ENCODE measurements at regions of chr3 and their contacts with region 1.

Region 1: DNA sequence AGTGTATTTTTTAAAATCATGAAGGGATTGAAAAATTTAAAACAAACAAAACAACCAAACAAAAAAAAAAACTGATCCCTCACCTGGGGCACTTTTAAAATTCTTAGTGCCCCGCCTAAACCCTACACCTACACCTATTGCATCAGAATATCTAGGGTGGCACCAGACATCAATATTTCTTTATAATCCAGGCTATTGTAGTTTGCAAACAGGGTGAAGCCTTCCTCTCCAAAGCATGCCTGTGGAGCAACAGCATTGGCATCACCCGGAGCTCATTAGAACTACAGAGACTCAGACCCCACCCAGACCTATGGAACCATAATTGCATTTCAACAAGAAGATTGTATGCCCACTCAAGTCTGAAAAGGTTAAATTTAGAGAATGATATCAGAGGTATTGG is 54.9 kb upstream of the ACP3 start:
- DNase-seq: no peak
- H3K4me3 ChIP-seq: no peak overlapping the region
- H3K27ac ChIP-seq: no peak overlapping the region
- H3K4me1 ChIP-seq: no peaks in the 10 kb centered on the region
- H3K27me3 ChIP-seq: no peaks in the 10 kb centered on the region
- CTCF ChIP-seq: no peak
- EP300 ChIP-seq: no peak
- POLR2A ChIP-seq: no peak

Region 2: DNA sequence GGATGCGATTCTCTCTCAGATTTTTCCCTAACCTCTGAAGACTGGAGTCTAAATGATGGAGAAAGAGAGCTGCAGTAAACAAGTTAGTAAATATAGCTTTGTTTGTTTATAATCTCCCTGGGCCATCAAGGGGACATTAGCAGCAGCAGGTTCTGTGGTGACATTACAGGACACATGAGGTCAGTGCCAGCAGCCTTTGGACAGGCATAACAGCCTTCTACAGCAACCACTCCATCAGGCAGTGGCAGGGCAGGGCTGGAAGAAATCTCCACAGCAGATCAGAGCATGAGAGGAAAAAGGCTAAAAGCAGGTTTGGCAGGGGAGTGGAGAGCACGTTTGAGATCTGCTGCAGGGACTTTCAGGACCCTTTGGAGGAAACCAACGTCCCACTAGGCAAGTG is 72.7 kb before region 1 on chr3:
- in situ Hi-C with region 1: no loop called
- intact Hi-C with region 1: no loop called
- DNase-seq: no peak
- H3K4me3 ChIP-seq: no peak overlapping the region
- H3K27ac ChIP-seq: no peak overlapping the region
- H3K4me1 ChIP-seq: no peaks in the 10 kb centered on the region
- H3K27me3 ChIP-seq: no peaks in the 10 kb centered on the region
- CTCF ChIP-seq: no peak
- EP300 ChIP-seq: no peak
- POLR2A ChIP-seq: no peak

Region 3: GRCh38 chr3:132292042-132292441 is 29.7 kb after region 1 on chr3:
- in situ Hi-C with region 1: no loop called
- intact Hi-C with region 1: loop called (anchors 1 kb)
- DNase-seq: no peak
- H3K4me3 ChIP-seq: no peak overlapping the region
- H3K27ac ChIP-seq: no peak overlapping the region
- H3K4me1 ChIP-seq: peaks cover 0 to 3% (median 0%) of the 10 kb centered on the region in 4 donors
- H3K27me3 ChIP-seq: no peaks in the 10 kb centered on the region
- CTCF ChIP-seq: no peak
- EP300 ChIP-seq: no peak
- POLR2A ChIP-seq: no peak

Measured in transverse colon (tissue), 4 donors.